Ascending aorta (tissue), 2 donors: ENCODE measurements at regions of chr1 and their contacts with region 1.

Region 1: GRCh38 chr1:58783993-58784757 is at the start of gene JUN:
- DNase-seq: peak; percentile 99 to 100
- H3K4me3 ChIP-seq: peak within 1 kb of the TSS; percentile 95 to 97
- H3K27ac ChIP-seq: peak within 1 kb of the TSS; percentile 99
- H3K4me1 ChIP-seq: peaks cover 0 to 5% of the 10 kb centered on the region in 2 donors
- H3K27me3 ChIP-seq: no peaks in the 10 kb centered on the region
- CTCF ChIP-seq: peak in 1 of 3 experiments; percentile 17
- total RNA-seq, gene JUN: 1,004 TPM

Region 2: DNA sequence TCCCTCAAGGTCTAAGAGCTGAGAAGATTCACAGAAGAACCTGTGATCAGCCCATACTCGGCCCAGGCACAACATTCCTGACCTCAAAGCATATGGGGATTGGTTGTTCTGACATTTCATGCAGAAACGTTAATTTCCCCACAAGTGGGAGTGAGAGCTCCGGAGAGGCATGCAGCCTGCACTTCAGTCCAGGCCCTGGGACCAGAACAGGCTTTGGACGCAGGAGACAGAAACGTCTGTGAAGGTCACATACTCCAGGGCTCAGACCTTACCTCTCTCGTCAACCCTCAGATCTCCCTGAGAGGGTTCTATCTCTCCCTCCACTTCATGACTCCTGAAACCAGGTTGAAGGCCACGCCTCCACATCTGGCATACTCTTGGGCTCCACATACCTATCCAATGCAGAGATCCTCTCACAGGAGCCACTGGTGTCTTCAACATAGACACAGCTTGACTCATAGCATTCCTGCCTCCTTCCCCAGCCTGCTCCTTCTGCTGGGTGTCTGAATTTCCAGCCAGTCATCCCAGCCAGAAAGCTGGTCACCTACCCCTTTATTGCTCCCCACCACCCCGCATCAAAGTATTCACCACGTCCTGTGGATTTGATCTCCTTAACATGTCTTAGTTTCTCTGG is 386.9 kb before region 1 on chr1:
- intact Hi-C with region 1: no loop called
- DNase-seq: no peak
- H3K4me3 ChIP-seq: no peak overlapping the region
- H3K27ac ChIP-seq: no peak overlapping the region
- H3K4me1 ChIP-seq: no peaks in the 10 kb centered on the region
- H3K27me3 ChIP-seq: no peaks in the 10 kb centered on the region
- CTCF ChIP-seq: no peak

Region 3: GRCh38 chr1:58816072-58816746 is 32.0 kb after region 1 on chr1:
- intact Hi-C with region 1: loop called (anchors 1 kb)
- DNase-seq: peak; percentile 47 to 94
- H3K4me3 ChIP-seq: peak overlapping the region; percentile 64 to 83
- H3K27ac ChIP-seq: peak overlapping the region; percentile 86 to 97
- H3K4me1 ChIP-seq: peaks cover 5 to 25% of the 10 kb centered on the region in 2 donors
- H3K27me3 ChIP-seq: no peaks in the 10 kb centered on the region
- CTCF ChIP-seq: no peak

Region 4: GRCh38 chr1:58903514-58904298 is 119.5 kb after region 1 on chr1:
- intact Hi-C with region 1: loop called (anchors 1 kb)
- DNase-seq: peak; percentile 85 to 98
- H3K4me3 ChIP-seq: peak overlapping the region; percentile 59 to 76
- H3K27ac ChIP-seq: peak overlapping the region; percentile 91 to 97
- H3K4me1 ChIP-seq: peaks cover 2 to 7% of the 10 kb centered on the region in 2 donors
- H3K27me3 ChIP-seq: no peaks in the 10 kb centered on the region
- CTCF ChIP-seq: no peak

Region 5: GRCh38 chr1:59061876-59062275 is 277.7 kb after region 1 on chr1:
- intact Hi-C with region 1: loop called (anchors 2 kb)
- DNase-seq: peak; percentile 26 to 93
- H3K4me3 ChIP-seq: peak overlapping the region; percentile 28 to 55
- H3K27ac ChIP-seq: peak overlapping the region; percentile 78 to 80
- H3K4me1 ChIP-seq: peaks cover 3 to 15% of the 10 kb centered on the region in 2 donors
- H3K27me3 ChIP-seq: no peaks in the 10 kb centered on the region
- CTCF ChIP-seq: no peak

Region 6: DNA sequence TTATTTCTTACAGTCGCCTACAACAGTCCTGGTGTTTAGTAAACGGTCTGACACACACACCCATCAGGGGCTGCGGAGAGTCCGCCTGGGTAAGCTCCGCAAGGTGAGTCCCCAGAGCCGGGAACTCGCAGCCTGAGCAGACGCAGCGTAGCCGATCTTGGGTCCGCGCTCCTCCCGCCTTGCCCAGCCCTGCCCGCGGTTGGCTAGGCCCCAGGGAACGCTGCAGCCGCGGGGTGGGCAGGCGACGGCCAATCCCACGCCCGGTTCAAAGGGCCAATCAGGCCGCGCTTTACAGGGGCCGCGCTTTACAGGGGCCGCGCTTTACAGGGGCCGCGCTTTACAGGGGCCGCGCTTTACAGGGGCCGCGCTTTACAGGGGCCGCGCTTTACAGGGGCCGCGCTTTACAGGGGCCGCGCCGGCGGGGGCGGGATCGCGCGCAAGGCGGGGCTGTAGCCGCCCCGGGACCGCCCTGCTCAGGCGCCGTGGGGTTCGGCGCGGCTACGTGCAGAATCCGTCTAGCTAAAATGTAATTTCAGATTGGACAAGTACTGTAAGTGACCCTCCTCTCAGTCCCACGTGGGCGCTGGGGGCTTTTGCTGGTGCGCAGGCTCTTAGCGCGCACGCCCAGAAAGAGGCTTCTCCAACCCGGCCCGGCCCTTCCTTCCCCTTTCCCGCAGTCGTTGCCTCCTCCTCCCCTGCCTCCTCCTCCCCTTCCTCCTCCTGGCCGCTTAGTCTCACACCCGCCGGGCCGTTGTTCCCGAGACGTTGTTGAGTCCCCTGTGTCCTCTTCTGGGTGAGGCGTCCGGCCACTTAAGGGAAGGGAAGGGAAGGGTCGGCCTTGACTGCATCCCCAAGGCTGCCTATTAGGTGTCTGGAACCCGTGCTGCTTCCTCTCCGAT is 512.4 kb after region 1 on chr1 and contains the start of gene FGGY:
- intact Hi-C with region 1: loop called (anchors 1 kb)
- DNase-seq: peak; percentile 96 to 99
- H3K4me3 ChIP-seq: peak within 1 kb of the TSS; percentile 69 to 70
- H3K27ac ChIP-seq: peak within 1 kb of the TSS; percentile 96 to 99
- H3K4me1 ChIP-seq: peaks cover 11 to 13% of the 10 kb centered on the region in 2 donors
- H3K27me3 ChIP-seq: no peaks in the 10 kb centered on the region
- CTCF ChIP-seq: no peak
- total RNA-seq, gene FGGY: 7.0 TPM

Region 7: GRCh38 chr1:59432531-59433439 is 648.6 kb after region 1 on chr1:
- intact Hi-C with region 1: loop called (anchors 5 kb)
- DNase-seq: no peak
- H3K4me3 ChIP-seq: no peak overlapping the region
- H3K27ac ChIP-seq: peak overlapping the region; percentile 67 to 72
- H3K4me1 ChIP-seq: peaks cover 9 to 30% of the 10 kb centered on the region in 2 donors
- H3K27me3 ChIP-seq: no peaks in the 10 kb centered on the region
- CTCF ChIP-seq: no peak

Region 8: GRCh38 chr1:59699227-59699847 is 915.2 kb after region 1 on chr1:
- intact Hi-C with region 1: loop called (anchors 2 kb)
- DNase-seq: no peak
- H3K4me3 ChIP-seq: peak overlapping the region in 1 of 2 donors; percentile 23
- H3K27ac ChIP-seq: peak overlapping the region in 1 of 2 donors; percentile 38
- H3K4me1 ChIP-seq: peaks cover 3 to 18% of the 10 kb centered on the region in 2 donors
- H3K27me3 ChIP-seq: no peaks in the 10 kb centered on the region
- CTCF ChIP-seq: peak; percentile 88 to 95 (median 92)